Activated T-helper 1 cell treated with anti-CD3 and anti-CD28 coated beads, Interleukin-12 subunit alpha, Interleukin-12 subunit beta, Interleukin-2, Interleukin-4 antibody, amounts not matched to agents 30 ng/mL and 10 ng/mL and 1 ng/mL, durations not matched to agents 14 hours and 24 hours and 36 hours (primary cell): ENCODE measurements at regions of chr2 and their contacts with region 1.

Region 1: GRCh38 chr2:101717071-101717845 is 19.8 kb downstream of the MAP4K4 start:
- DNase-seq: no peak
- H3K4me3 Mint-ChIP-seq: peak overlapping the region; percentile 59
- H3K27ac Mint-ChIP-seq: peak overlapping the region; percentile 90
- H3K4me1 Mint-ChIP-seq: peaks cover 71% of the 10 kb centered on the region
- H3K27me3 Mint-ChIP-seq: no peaks in the 10 kb centered on the region

Region 2: DNA sequence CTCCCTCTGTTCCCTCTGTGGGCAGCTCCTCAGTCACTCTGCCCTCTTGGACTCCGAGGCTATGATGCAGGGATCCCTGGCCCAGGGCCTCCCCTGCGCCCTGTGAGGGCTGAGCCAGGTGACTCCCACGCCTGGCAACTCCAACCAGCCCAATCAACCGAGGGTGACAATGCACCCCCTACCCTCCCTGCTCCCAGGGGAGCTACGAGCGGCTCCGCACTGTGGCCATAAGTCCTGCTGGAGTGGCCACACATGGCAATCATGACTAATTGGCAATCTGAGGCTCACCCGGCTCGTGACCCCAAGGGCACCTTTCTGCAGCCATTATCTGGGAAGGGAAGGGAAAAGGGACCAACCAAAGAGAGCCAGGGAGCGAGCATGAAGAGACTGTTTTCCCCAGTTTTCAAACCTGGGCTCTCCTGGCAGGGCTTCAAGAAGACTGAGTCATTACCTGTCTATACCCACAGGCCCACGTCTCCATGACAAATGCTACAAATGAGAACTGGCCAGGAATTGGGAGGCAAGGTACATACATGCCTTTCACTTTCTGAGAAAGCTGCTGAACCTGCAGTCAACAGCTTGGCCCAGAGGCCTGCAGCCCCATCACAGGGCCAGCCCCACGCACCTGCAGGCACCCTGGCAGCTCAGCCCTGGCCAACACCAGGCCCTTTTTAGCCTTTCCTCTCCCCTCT is 670.0 kb before region 1 on chr2:
- intact Hi-C with region 1: no loop called
- DNase-seq: no peak
- H3K4me3 Mint-ChIP-seq: no peak overlapping the region
- H3K27ac Mint-ChIP-seq: no peak overlapping the region
- H3K4me1 Mint-ChIP-seq: no peaks in the 10 kb centered on the region
- H3K27me3 Mint-ChIP-seq: peaks cover 3% of the 10 kb centered on the region

Region 3: GRCh38 chr2:101473911-101474701 is 243.2 kb before region 1 on chr2:
- intact Hi-C with region 1: loop called (anchors 5 kb)
- DNase-seq: peak; percentile 52
- H3K4me3 Mint-ChIP-seq: peak overlapping the region; percentile 84
- H3K27ac Mint-ChIP-seq: peak overlapping the region; percentile 86
- H3K4me1 Mint-ChIP-seq: peaks cover 62% of the 10 kb centered on the region
- H3K27me3 Mint-ChIP-seq: no peaks in the 10 kb centered on the region

Region 4: GRCh38 chr2:101704046-101704466 is 13.2 kb before region 1 on chr2:
- intact Hi-C with region 1: loop called (anchors 1 kb)
- DNase-seq: no peak
- H3K4me3 Mint-ChIP-seq: peak overlapping the region; percentile 78
- H3K27ac Mint-ChIP-seq: peak overlapping the region; percentile 82
- H3K4me1 Mint-ChIP-seq: peaks cover 64% of the 10 kb centered on the region
- H3K27me3 Mint-ChIP-seq: no peaks in the 10 kb centered on the region

Region 5: DNA sequence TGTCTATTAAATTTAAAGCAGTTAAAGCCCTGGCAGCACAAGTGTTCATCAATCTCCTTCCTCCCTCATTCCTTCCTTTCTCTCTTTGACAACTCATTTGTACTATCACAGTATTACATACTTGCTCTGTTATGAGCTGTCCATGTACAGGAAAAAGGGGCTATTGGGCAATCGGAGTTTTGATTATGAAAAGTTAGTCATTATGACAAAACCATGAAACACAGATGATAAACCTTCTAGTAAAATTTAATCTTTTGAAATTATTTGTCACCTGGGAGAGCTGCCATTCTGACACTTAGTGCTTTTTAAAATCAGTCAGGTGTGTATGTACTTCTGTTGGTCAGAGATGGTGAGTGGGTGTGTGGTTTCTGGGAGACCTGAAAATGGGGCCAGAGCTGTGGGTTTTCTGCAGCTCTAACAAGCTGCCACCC is 19.6 kb after region 1 on chr2:
- intact Hi-C with region 1: loop called (anchors 1 kb)
- DNase-seq: no peak
- H3K4me3 Mint-ChIP-seq: no peak overlapping the region
- H3K27ac Mint-ChIP-seq: peak overlapping the region; percentile 37
- H3K4me1 Mint-ChIP-seq: peaks cover 69% of the 10 kb centered on the region
- H3K27me3 Mint-ChIP-seq: no peaks in the 10 kb centered on the region

Region 6: DNA sequence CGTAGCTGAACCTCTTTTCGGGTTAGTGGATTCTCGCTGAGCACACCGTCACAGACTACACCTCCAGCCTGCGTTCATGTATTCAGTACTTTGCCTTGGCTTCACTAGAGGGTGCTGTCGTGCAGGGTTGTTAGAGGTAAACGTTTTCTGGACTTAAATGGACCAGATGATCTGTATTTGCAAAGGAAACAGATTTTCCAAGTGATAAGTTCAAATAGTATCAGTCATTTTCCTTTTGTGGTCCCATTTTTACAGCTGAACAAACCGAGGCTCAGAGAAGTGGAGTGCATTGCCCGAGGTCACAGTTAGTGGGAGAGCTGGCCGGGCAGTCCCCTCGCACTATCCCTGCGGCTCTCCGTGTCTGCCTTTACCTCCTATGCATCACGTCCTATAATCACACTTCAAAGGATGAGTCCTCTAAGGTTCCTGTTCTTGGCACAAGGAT is 106.1 kb after region 1 on chr2:
- intact Hi-C with region 1: loop called (anchors 5 kb)
- DNase-seq: peak; percentile 63
- H3K4me3 Mint-ChIP-seq: peak overlapping the region; percentile 32
- H3K27ac Mint-ChIP-seq: peak overlapping the region; percentile 30
- H3K4me1 Mint-ChIP-seq: peaks cover 75% of the 10 kb centered on the region
- H3K27me3 Mint-ChIP-seq: no peaks in the 10 kb centered on the region

Region 7: DNA sequence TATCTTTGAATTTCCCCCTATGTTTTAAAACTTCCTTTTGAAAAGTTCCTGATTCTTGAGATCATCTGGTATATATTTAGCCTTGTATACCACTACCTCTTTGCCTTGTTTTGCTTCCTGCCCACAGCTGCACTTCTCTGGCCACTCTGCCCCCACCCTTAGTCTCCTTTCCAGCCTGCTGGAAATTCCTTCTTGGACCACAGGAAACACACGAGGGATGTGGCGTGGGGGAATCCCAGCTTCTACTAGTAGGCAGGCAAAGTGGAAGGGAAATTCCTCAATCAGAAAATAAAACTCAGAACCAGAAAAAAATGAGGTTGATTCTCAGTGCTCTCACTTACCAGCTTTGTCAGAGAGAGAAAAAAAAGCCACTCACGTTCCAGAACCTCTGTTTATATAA is 719.1 kb after region 1 on chr2:
- intact Hi-C with region 1: loop called (anchors 5 kb)
- DNase-seq: no peak
- H3K4me3 Mint-ChIP-seq: peak overlapping the region; percentile 53
- H3K27ac Mint-ChIP-seq: peak overlapping the region; percentile 86
- H3K4me1 Mint-ChIP-seq: peaks cover 33% of the 10 kb centered on the region
- H3K27me3 Mint-ChIP-seq: no peaks in the 10 kb centered on the region